Right lobe of liver (tissue), 6 donors: ENCODE measurements at regions of chr1 and their contacts with region 1.

Region 1: DNA sequence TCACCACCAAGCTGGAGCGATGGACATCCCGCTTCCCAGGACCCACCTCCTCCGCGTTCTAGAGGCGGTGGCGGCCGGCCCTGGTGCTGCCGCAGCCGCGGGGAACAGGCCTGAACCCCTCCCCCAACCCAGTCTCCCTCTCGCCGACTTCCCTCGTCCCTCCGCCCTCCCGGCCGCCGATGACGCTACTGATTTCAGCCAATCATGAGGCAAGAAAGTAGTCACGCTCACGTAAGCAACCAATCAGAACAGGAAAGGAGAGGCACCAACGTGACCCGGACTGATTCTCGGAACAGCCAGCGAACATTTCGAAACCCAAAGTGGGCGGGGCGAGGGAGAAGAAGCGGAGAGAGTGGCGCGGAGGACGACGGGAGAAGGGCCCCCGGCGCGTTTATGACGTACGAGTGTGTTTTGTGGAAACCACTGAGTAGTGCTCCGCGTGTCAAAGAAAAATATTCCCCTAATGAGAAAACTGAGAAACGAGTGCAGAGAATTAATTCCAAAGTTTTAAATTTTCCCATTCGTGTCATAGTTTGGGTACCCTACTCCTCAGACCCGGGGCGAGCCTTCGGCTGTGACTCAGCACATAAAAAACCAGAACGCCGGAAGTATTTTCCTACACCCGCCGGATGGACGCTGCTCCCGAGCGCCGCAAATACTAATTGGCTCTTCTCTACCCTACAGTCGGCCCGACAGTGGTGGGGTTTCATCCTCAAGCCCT is at the start of gene NRDC:
- DNase-seq: peak; percentile 99 to 100 (median 99)
- ATAC-seq: peak; percentile 94 to 97 (median 95)
- H3K4me3 ChIP-seq: peak within 1 kb of the TSS; percentile 58 to 98 (median 97)
- H3K27ac ChIP-seq: peak within 1 kb of the TSS; percentile 86 to 98 (median 91)
- H3K4me1 ChIP-seq: peaks cover 0 to 28% (median 6%) of the 10 kb centered on the region in 4 donors
- H3K27me3 ChIP-seq: no peaks in the 10 kb centered on the region
- CTCF ChIP-seq: no peak
- POLR2A ChIP-seq: peak; percentile 95
- total RNA-seq, gene NRDC: 57.9 to 88.0 (median 84.4) TPM

Region 2: DNA sequence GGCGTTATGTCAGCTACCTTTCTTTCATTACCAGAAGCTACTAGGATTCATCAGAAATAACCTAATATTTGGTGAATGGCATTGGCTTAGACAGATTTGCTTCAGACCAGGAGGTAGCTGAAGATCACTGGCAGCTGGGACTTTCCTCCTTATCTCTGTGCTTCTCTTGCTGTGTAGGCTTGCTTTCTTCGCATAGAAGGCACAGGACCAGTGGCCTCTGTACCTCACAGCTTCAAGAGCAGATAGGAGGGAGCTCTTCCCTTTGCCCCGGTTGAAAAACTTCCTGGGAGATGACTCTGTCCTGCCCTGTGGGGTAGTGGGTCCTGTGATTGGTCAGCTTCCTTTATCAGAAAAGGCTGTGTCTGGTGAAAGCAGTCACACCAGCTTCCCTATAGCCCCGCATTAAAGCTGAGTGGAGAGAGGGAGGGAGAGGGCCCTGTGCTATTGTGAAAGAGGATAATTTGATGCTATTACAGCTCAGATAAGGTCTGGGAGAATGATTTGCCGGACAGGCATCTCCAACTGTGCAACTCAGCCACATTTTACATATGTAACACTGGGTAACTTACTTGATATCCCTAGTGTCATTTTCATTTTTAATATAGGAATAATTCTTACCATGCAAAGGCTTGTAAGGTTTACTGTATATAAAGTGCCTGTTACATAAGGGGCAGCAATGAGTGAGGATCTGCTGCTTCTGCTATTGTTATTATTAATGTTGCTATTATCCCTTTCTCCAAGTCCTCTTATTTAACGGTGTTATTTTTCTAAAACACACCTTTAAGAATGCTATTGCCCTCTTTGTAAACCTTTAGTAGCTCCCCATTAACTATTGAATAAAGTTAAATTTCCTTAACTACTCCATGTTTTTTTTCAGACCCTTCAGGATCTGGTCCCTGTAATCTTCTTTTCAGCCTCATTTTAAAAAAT is 230.3 kb before region 1 on chr1:
- intact Hi-C with region 1: no loop called
- DNase-seq: no peak
- ATAC-seq: peak; percentile 75 to 80 (median 78)
- H3K4me3 ChIP-seq: no peak overlapping the region
- H3K27ac ChIP-seq: peak overlapping the region in 2 of 3 donors; percentile 12 to 30
- H3K4me1 ChIP-seq: peaks cover 0 to 41% (median 22%) of the 10 kb centered on the region in 4 donors
- H3K27me3 ChIP-seq: no peaks in the 10 kb centered on the region
- CTCF ChIP-seq: no peak
- POLR2A ChIP-seq: no peak

Region 3: DNA sequence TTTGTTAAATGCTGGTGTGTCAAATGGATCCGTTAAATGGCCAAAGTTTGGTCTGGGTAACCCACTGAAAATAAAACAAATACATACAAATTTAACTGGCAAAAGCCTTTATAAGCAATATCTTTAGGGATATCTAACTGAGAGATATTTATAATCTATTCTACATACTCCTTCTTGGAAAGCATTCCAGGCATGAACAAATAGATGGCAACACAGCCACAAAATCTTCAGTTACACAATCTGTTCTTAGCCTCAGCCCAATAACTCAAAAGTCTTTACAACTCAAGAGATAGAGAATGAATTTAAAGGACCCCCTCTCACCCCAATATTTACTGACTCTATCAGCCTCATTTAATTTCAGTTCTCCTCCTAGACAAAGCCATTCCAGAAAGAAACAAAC is 59.0 kb before region 1 on chr1:
- intact Hi-C with region 1: loop called in 1 of 2 experiments (anchors 10 kb)
- DNase-seq: no peak
- ATAC-seq: no peak
- H3K4me3 ChIP-seq: no peak overlapping the region
- H3K27ac ChIP-seq: no peak overlapping the region
- H3K4me1 ChIP-seq: no peaks in the 10 kb centered on the region
- H3K27me3 ChIP-seq: no peaks in the 10 kb centered on the region
- CTCF ChIP-seq: no peak
- POLR2A ChIP-seq: no peak